GM12878 (cell line): ENCODE measurements at regions of chr6 and their contacts with region 1.

Region 1: DNA sequence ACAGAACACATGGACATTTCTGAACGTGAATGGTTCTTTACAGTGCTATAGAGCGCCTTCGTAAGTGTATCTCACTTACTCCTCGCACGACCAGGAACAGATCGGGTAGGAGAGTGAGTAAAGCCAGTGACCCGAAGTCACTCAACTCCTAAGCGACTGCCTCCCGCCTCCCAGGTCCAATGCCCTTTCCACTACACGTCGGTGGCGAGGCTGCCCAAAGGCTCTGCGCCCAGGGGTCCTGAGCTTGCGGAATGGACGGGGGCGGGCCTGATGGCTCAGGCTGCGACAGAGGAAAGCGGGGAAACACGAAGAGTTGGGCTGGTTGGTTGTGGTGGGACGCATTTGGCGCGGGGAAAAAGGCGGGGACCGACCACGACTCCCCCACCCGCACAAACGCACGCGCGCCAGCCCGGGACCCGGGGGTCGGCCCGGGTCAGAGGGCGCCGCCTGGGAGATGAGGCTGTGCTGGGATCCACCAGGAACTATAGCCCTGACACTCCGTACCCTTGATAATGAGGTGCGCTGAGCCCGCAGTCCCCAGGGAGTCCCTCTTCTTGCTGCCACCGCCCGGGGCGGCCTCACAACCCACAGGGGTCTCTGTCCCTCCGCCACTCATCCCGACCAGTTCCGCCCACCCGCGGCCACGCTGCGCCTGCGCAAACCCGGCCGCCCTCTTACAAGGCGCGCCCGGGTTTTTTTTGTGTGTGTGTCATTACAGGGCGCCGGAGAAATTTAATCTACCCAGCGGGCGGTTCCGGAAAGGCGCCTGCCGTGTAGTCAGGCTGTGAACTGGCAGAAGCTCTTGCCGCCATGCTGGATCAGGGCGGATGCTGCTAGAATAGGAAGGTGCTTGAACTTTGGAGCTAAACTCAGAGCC is at the start of gene BLOC1S5:
- DNase-seq: peak; percentile 85
- ATAC-seq: peak; percentile 96
- H3K4me3 ChIP-seq: peak within 1 kb of the TSS; percentile 84
- H3K27ac ChIP-seq: peak within 1 kb of the TSS; percentile 91
- H3K4me1 ChIP-seq: peaks cover 20% of the 10 kb centered on the region
- H3K27me3 ChIP-seq: no peaks in the 10 kb centered on the region
- CTCF ChIP-seq: peak in 1 of 3 experiments; percentile 6; a peak in 1 of 6 replicates
- EP300 ChIP-seq: no peak
- POLR2A ChIP-seq: peak; percentile 91
- RAD21 ChIP-seq: no peak
- polyA plus RNA-seq, gene BLOC1S5: 4.3 to 5.9 TPM

Region 2: GRCh38 chr6:7615611-7616383 is 448.2 kb before region 1 on chr6:
- CTCF ChIA-PET with region 1: interaction called, 3 read pairs
- POLR2A ChIA-PET with region 1: no interaction called
- RAD21 ChIA-PET with region 1: no interaction called
- SMC1A ChIA-PET with region 1: interaction called, 3 read pairs
- in situ Hi-C with region 1: no loop called
- intact Hi-C with region 1: loop called (anchors 5 kb)
- DNase-seq: no peak
- ATAC-seq: peak; percentile 57
- H3K4me3 ChIP-seq: no peak overlapping the region
- H3K27ac ChIP-seq: no peak overlapping the region
- H3K4me1 ChIP-seq: peaks cover 5% of the 10 kb centered on the region; the same call in 1 of the 2 replicates
- H3K27me3 ChIP-seq: no peaks in the 10 kb centered on the region
- CTCF ChIP-seq: peak; percentile 72 to 83 (median 75)
- EP300 ChIP-seq: no peak
- POLR2A ChIP-seq: no peak
- RAD21 ChIP-seq: peak; percentile 92

Region 3: DNA sequence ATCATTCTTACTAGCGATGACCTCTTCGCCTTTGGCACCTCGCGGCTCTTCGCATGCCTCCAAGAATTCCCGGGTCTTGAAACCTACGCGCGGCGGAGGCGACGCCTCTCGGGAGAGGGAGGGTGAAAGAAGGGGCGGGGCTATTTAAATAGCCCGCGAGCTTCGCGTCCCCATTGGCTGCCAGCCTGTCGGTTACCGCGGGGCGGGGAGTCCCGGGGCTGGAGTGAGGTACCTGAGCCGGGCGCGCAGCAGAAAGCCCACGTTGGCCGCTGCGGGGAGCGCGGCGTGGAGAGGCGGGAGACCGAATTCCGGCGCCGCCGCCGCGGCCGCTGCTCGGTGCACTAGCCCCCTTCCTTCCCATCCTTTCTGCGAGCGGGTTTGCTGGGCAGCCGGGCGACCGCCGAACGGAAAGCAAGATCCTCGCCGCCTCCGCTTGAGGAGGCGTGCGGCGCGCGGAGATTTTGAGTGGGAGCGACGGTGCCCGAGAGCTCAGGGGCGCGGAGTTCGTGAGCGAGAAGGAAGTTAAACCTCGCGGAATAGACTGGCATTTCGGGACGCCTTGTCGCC is 338.1 kb before region 1 on chr6 and contains the start of gene BMP6:
- CTCF ChIA-PET with region 1: interaction called, 81 read pairs
- POLR2A ChIA-PET with region 1: no interaction called
- RAD21 ChIA-PET with region 1: interaction called, 20 read pairs
- SMC1A ChIA-PET with region 1: interaction called, 25 read pairs
- in situ Hi-C with region 1: loop called (anchors 5 kb)
- intact Hi-C with region 1: loop called (anchors 1 kb)
- DNase-seq: no peak
- ATAC-seq: peak; percentile 88
- H3K4me3 ChIP-seq: peak within 1 kb of the TSS; percentile 63
- H3K27ac ChIP-seq: no peak within 1 kb of the TSS
- H3K4me1 ChIP-seq: peaks cover 3% of the 10 kb centered on the region; the same call in 1 of the 2 replicates
- H3K27me3 ChIP-seq: peaks cover 12 to 26% of the 10 kb centered on the region in 2 experiments
- CTCF ChIP-seq: no peak
- EP300 ChIP-seq: no peak
- POLR2A ChIP-seq: no peak
- RAD21 ChIP-seq: no peak
- polyA plus RNA-seq, gene BMP6: 0.02 to 0.11 TPM

Region 4: GRCh38 chr6:7899101-7899888 is 164.7 kb before region 1 on chr6:
- CTCF ChIA-PET with region 1: interaction called, 13 read pairs
- POLR2A ChIA-PET with region 1: no interaction called
- RAD21 ChIA-PET with region 1: interaction called, 11 read pairs
- SMC1A ChIA-PET with region 1: interaction called, 14 read pairs
- in situ Hi-C with region 1: no loop called
- intact Hi-C with region 1: loop called (anchors 5 kb)
- DNase-seq: no peak
- ATAC-seq: peak; percentile 77
- H3K4me3 ChIP-seq: no peak overlapping the region
- H3K27ac ChIP-seq: no peak overlapping the region
- H3K4me1 ChIP-seq: peaks cover 21% of the 10 kb centered on the region
- H3K27me3 ChIP-seq: no peaks in the 10 kb centered on the region
- CTCF ChIP-seq: peak; percentile 31 to 50 (median 34); a peak in 4 of 6 replicates
- EP300 ChIP-seq: no peak
- POLR2A ChIP-seq: no peak
- RAD21 ChIP-seq: peak; percentile 65

Region 5: DNA sequence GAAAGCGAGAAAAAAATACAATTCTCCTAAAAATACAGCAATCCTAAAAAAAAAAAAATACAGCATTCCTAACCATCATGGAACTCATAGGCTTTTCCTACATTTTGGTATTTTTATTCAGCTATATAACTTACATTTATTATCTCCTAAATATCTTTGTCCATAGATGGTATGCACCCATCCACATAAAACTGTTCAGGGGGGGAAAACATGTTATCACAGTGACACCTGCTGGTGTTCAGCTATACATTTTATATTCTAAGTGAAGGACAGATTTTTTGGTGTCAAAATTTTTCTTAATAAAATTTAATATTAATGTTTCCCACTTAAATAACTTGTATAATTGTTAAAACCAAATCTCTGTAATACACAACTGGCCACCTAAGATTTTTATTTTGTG is 57.8 kb before region 1 on chr6:
- CTCF ChIA-PET with region 1: interaction called, 12 read pairs
- POLR2A ChIA-PET with region 1: no interaction called
- RAD21 ChIA-PET with region 1: no interaction called
- SMC1A ChIA-PET with region 1: interaction called, 5 read pairs
- in situ Hi-C with region 1: no loop called
- intact Hi-C with region 1: no loop called
- DNase-seq: no peak
- ATAC-seq: peak; percentile 46; the same call in 1 of the 3 replicates
- H3K4me3 ChIP-seq: no peak overlapping the region
- H3K27ac ChIP-seq: no peak overlapping the region
- H3K4me1 ChIP-seq: no peaks in the 10 kb centered on the region
- H3K27me3 ChIP-seq: no peaks in the 10 kb centered on the region
- CTCF ChIP-seq: peak; percentile 27 to 51 (median 32); a peak in 4 of 6 replicates
- EP300 ChIP-seq: no peak
- POLR2A ChIP-seq: no peak
- RAD21 ChIP-seq: peak; percentile 81

Region 6: DNA sequence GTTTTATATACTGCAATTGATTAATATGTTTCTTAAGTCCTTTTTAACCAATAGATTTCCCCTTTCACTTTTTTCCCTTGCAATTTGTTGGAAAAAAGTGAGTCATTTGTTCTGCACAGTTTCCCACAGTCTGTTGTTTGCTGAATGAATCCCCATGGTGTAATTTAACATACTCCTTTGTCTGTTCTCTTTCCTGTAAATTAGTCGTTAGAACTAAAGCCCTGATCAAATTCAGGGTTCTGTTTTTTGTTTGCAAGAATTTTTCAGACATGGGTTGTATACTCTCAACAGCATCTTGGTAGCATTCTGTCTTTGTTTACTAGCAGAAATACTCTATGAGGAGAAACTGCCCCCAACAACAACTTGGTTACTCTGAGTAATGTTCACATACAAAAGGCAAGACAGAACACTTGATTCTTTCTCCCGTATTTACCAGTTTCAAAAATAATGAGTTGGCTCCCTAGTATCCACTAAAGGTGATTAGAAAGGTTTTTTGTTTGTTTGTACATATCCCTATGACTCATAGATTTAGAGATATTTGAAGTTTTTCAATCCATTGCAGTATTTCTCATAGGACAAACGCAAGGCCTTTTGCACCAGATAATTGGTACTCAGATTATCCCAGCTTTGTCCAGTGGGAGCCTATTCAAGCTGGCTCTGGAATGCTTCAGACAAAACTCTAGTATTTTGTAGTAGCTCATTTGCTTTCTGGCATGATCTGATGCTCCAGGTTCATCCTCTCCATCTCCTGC is 16.3 kb before region 1 on chr6:
- CTCF ChIA-PET with region 1: interaction called, 13 read pairs
- POLR2A ChIA-PET with region 1: no interaction called
- RAD21 ChIA-PET with region 1: no interaction called
- SMC1A ChIA-PET with region 1: interaction called, 4 read pairs
- in situ Hi-C with region 1: no loop called
- intact Hi-C with region 1: no loop called
- DNase-seq: no peak
- ATAC-seq: no peak
- H3K4me3 ChIP-seq: no peak overlapping the region
- H3K27ac ChIP-seq: no peak overlapping the region
- H3K4me1 ChIP-seq: no peaks in the 10 kb centered on the region
- H3K27me3 ChIP-seq: no peaks in the 10 kb centered on the region
- CTCF ChIP-seq: no peak
- EP300 ChIP-seq: no peak
- POLR2A ChIP-seq: no peak
- RAD21 ChIP-seq: no peak

Region 7: DNA sequence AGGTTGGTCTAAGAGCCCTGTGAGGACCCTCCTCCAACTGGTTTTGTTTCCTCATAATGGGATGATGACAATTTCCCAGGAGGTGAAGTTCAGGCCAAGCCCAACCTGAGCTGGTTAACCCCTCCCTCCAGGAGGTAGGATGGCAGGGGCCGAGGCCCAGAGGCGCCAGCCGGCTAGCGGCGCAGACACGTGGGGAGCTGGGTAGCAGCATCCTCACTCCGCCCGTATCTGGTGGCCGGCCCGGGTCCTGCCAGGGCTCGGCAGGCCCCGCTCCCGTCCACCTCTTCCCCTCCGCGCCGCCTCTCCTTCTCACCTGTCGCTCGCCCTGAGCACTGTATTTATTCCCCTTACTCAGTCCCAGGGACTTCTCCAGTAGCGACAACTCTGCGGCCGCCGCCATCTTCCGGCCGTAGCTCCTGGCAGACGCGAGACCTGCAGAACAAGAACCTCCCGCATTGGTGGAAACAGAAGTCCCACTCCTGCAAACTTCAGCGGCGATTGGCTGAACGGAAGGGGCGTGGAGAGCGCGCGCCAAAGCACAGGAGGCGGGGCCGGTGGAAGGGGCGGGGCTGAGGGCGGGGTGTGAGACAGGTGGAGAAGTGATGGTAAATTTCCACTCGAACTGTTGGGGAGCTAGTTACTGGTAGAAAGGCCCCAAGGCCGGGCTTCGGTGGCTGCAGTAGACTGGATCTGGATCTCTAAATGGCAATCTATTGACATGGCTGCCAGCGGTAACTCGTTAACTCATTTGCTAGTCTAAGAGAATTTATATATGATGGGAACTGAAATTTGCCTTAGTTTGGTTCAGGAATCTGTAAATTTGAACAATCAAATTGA is 38.3 kb after region 1 on chr6 and contains the start of gene EEF1E1:
- CTCF ChIA-PET with region 1: interaction called, 4 read pairs
- POLR2A ChIA-PET with region 1: interaction called, 21 read pairs
- RAD21 ChIA-PET with region 1: interaction called, 20 read pairs
- SMC1A ChIA-PET with region 1: interaction called, 10 read pairs
- in situ Hi-C with region 1: no loop called
- intact Hi-C with region 1: loop called (anchors 2 kb)
- DNase-seq: peak; percentile 77
- ATAC-seq: peak; percentile 99
- H3K4me3 ChIP-seq: peak within 1 kb of the TSS; percentile 83
- H3K27ac ChIP-seq: peak within 1 kb of the TSS; percentile 57
- H3K4me1 ChIP-seq: peaks cover 3% of the 10 kb centered on the region
- H3K27me3 ChIP-seq: no peaks in the 10 kb centered on the region
- CTCF ChIP-seq: no peak
- EP300 ChIP-seq: no peak
- POLR2A ChIP-seq: peak; percentile 86
- RAD21 ChIP-seq: no peak
- polyA plus RNA-seq, gene EEF1E1: 594 to 668 TPM